Cardiac septum (tissue), 1 donor: ENCODE measurements at regions of chr7 and their contacts with region 1.

Region 1: GRCh38 chr7:106064771-106065585 is 47.1 kb downstream of the SYPL1 start:
- DNase-seq: peak; percentile 90

Region 2: DNA sequence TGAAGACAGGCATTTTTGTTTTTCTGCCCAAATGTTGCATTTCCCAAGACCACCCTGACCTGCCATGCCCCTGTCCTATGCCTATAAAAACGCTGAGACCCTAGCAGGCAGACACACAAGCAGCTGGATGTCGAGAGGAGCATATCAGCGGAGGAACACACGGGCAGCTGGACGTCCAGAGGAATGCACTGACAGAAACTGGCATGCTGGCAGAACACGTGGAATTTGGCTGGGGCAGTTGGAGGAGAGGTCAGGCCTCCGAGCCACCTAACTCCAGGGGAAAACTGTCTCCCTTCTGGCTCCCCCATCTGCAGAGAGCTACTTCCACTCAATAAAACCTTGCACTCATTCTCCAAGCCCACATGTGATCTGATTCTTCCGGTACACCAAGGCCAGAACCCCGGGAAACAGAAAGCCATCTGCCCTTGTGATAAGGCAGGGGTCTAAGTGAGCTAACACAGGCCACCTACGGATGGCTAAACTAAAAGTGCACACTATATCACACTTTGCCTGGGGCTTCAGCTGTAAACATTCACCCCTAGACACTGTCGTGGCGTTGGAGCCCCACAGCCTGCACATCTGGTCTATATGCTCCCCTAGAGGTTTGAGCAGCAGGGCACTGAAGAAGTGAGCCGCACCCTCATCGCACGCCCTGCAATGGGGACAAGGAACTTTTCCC is 111.9 kb before region 1 on chr7:
- intact Hi-C with region 1: no loop called
- DNase-seq: no peak

Region 3: DNA sequence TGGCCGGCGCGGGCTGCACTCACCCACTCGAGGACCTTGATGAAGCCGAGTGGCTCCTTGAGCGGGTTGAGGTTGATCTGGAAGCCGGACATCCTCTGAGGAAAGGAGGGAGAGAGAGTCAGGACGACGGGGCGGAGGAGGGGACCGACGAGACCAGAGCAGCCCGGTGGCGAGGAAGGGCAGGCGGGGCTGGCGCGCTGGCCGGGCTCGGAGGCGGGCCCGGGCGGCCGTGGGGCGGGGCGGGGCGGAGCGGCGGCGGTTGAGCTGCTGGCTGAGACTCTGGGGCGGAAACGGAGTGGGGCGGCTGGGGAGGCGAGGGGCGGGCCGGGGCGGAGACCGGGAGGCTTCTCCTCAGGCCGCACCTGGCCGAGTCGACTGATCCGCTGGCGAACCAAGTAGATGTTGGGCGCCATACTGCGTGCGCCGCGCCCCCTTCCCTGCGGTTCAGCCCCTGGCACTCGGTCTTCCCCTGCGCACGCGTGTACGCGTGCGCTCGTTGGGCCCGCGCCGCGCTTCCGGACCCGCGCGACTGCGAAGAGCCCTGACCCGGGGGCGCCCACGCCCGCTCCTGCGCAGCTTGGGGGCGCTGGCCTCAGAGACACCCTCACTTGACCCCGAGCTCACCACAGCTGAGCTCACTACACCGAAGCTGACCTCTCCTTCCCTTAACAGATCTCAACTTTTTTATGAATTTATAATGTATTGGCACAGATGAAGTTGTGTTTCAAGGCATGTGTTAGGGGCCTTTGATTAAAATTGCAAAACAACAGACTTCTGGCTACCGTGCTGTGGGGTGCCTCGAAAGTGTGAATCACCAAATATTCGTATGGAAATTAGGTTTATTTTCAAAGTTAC is 47.4 kb after region 1 on chr7 and contains the start of gene SYPL1:
- intact Hi-C with region 1: loop called (anchors 2 kb)
- DNase-seq: peak; percentile 97
- total RNA-seq, gene SYPL1: 58.3 TPM

Region 4: DNA sequence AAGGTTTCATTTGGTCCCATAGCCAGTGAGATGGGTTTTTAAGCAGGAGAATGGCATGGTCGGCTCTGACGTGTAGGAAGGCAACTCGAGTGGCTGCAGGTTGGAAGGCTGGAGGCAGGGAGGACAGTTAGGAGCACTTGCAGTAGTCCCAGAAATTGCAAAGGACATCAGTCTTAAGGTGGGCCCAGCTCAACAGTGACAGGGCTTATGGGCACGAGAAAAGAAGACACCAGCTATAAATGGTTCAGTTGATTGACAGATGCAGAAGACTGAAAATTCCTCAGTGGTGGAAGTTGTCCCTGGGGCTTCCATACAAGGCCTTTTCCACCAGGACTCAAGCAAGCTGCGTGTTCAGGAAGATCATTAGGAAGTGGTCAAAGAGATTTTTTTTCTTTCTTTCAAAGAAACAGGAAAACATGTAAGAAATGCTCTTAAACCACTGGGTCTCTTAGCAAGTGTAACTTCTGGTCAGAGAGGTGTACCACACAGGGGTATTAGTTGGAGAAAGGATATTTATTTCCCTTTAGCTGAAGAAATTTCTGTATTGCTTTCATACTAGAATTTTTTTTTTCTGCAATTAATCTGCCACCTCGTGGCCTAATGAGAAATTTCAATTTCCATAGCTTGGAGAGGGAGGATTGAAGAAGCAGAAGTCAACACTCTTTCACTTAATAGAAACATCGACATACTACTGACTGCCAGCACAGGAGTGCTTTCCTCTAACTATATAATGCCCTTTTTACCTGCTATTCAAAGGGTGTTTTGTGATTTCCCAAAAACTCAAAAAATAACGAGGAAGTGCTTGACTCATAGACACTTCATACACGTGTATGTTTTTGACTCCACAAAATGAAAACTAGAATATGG is 397.2 kb after region 1 on chr7:
- intact Hi-C with region 1: loop called (anchors 10 kb)
- DNase-seq: no peak